Posterior cingulate gyrus (tissue), 11 donors: ENCODE measurements at regions of chr14 and their contacts with region 1.

Region 1: GRCh38 chr14:77457522-77458290 is at the starts of genes AHSA1 and VIPAS39:
- DNase-seq: peak; percentile 92 to 99 (median 95)

Region 2: DNA sequence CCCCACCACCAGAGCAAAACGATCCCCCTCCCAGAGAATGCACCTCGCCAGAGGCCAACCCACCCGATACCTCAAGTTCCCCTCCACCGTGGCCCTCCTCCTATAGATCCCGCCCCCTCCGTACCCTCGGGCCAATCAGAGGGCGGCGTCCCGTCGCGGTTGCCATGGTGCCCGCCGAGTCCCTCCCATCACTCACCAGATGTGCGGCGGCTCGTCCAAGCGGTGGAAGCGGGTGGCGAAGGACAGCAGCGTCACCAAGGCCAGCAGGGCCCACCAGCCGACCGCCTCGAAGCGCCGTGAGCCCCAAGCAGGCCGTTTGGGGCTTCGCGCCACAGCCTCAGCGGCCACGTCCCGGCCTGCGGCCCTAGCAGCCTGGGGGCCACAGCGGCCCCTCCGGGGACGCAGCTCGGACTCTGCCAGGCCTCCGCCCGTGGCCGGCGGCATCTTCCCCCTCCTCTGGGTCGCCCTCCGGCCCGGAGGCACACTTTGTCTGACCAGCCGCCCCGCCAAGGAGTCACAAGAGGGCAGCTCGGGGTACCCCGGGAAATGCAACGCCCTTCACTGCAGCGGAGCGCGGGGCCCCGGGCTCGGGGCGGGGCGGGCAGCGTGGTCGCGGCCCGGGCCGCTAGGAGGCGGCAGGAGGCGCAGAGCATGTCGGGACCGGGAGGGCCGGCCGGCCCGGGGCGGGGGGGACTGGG is 137.3 kb before region 1 on chr14 and contains the start of gene POMT2:
- intact Hi-C with region 1: loop called (anchors 2 kb)
- DNase-seq: peak; percentile 92 to 100 (median 96)

Region 3: DNA sequence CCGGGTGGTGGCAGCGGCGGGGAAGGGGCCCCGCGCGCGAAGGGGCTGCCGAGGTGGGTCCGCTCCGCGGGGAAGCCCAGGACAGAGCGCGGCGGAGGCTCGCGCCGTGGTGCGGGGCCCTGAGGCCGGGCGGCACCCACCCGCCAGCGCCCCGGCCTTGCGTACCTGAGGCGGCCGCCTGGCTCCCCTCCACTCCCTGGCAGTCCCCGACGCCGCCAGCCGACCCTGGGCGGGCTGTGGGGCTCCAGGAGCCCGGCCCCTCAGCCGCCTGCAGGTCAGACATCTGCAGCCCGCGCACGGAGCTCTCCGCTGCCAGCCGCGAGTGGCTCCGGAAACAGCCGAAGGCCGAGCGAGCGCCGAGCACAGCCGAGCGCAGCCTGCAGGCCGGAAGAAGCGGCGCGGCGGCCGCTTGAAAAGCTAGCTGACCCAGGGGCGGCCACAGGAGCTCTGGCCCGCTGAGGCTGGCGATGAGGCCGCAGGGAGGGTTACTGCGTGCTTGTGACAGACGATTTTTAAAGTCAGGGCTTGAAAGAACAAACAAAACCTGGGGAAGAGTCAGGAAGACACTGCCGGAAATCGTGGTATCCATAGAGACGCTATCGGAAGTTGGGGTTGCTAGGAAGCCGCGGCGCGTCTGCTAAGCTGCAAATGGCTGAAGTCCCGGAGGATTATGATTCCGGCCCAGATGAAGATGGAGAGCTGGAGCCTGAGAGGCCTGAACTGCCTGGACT is 80.8 kb before region 1 on chr14 and contains the starts of genes SAMD15 and TMED8:
- intact Hi-C with region 1: loop called (anchors 10 kb)
- DNase-seq: peak; percentile 73 to 97 (median 82)

Region 4: GRCh38 chr14:77554207-77554606 is 96.5 kb after region 1 on chr14:
- intact Hi-C with region 1: loop called (anchors 2 kb)
- DNase-seq: no peak

Region 5: GRCh38 chr14:77616454-77617229 is 158.9 kb after region 1 on chr14 and contains the start of gene SPTLC2:
- intact Hi-C with region 1: loop called (anchors 2 kb)
- DNase-seq: peak; percentile 99 to 100 (median 100)

Region 6: DNA sequence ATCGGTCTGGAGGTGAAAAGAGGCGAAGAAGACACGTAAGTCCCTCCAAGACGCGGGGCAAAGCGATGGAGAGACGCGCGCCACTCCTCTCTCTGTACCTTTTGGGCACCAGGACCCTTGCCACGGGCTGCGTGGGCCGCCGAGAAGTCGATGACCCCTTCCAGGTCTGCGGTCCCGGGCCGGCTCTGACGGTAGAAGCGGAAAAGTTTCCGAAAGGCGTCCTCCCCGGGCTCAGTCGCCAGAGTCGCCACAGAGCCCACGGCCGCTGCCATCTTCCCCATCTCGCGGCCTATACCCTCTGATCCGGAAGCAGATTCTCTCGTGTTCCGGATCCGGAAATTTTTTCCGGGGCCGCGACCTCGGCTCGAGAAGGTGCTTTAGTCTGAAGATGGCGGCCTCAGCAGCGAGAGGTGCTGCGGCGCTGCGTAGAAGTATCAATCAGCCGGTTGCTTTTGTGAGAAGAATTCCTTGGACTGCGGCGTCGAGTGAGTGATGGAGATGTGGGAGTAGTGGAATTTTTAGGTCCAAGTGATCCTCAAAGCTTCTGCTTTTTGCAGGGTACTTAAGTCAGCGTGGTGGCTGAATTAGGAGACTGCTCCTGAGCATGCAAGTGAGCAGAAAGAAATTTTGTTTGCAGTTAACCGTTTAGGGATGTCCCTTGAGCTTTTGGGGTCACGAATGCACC is 250.2 kb after region 1 on chr14 and contains the starts of genes ALKBH1 and SLIRP:
- intact Hi-C with region 1: loop called (anchors 5 kb)
- DNase-seq: peak; percentile 83 to 98 (median 89)